ENCODE measurements at regions of chr7 and their contacts with region 1.

Region 1: GRCh38 chr7:104225451-104225850 is 17.6 kb upstream of the ORC5 start:
- DNase-seq: no peak

Region 2: DNA sequence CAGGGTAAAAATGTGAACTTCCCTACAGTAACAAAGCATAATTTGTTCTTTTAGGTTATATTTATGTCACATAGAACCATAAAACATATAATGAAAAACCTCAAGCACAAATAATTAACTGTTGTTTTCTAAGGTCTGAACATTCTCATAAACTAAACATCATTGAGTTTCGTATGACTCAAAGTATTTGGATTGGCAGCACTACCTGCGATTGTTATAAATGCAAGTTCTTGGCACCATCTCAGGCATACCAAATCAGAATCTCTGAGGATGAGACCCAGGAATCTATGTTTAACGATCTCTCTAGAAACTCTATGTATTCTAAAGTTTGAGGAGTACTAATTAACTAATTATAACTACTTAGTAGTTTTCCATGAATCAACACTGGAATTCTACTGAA is 40.1 kb before region 1 on chr7:
- intact Hi-C with region 1: no loop called
- DNase-seq: no peak

Region 3: DNA sequence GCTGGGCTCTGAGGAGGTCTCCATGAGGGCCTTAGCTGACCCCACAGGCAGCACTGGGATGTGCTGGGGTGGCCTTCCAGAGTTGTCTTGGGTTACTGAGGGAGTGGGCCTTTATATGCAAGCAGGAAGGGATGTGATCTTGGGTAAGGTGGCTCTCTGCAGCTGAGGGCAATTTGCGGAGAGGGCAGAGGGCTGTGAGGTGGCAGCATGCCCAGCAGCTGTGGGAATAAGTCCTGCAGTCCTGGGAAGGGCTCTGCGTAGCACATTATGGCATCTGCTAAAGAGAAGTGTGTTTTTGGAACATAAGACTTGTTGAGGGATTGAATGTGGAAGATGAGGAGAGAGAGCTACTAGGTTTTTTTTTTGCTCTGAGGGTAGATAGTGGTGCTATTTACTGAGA is 689.0 kb after region 1 on chr7:
- intact Hi-C with region 1: loop called in 1 of 2 experiments (anchors 10 kb)
- DNase-seq: no peak

Measured in posterior vena cava (tissue), 2 donors.